HCT116 (cell line): ENCODE measurements at regions of chr20 and their contacts with region 1.

Region 1: GRCh38 chr20:50987592-50988210 is 29.1 kb downstream of the MOCS3 start:
- DNase-seq: peak; percentile 92
- ATAC-seq: peak; percentile 97
- H3K4me3 ChIP-seq: peak overlapping the region; percentile 34 to 36
- H3K27ac ChIP-seq: no peak overlapping the region
- H3K4me1 ChIP-seq: peaks cover 0 to 10% of the 10 kb centered on the region in 2 experiments; a peak in 1 of 4 replicates
- H3K27me3 ChIP-seq: no peaks in the 10 kb centered on the region
- CTCF ChIP-seq: peak; percentile 80 to 89 (median 86)
- POLR2A ChIP-seq: no peak
- RAD21 ChIP-seq: peak; percentile 96

Region 2: DNA sequence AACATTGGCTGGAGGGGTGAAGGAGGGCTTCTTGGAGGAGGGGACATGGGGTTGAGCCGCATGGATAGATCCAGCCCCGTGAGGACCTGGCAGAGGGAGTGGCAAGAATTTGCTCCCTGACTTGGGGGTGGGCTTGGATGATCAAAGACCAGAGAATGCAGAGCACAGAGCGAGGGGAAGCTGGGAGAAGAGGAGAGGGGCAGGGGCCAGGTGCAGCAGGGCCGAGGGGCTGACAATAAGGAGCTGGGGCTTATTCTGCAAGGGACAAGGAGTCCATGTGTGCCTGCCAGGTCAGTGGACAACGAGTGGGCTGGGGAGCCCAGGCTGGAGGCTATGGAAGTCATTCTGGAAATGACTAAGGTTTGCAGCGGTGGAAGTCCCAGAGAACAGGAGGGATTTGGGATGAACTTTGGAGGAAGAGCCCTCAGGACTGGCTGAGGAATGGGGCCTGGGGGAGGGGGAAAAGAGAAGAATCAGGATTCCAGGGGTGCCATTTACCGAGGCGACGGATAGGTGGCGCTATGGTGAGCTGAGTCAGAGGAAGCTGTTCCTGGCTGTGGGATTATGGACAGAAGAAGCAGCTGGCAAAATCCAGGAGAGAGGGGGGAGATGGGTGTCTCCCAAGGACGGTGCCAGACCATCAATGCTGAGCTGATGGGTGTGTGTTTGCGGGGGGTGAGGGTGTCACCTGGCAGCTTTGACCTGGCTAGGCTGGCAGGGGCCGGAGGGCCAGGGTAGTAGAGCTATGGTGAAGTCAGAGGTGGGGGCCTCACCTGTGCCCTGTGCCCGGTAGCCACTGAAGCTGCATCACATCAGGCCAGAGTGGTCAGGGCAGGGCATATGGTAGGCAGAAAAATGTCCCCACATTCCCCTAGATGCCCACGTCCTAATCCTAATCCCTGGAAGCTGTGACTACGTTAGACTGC is 27.4 kb after region 1 on chr20:
- CTCF ChIA-PET with region 1: interaction called, 27 read pairs
- POLR2A ChIA-PET with region 1: no interaction called
- RAD21 ChIA-PET with region 1: interaction called, 5 to 6 read pairs
- intact Hi-C with region 1: no loop called
- DNase-seq: no peak
- ATAC-seq: peak; percentile 93
- H3K4me3 ChIP-seq: no peak overlapping the region
- H3K27ac ChIP-seq: no peak overlapping the region
- H3K4me1 ChIP-seq: no peaks in the 10 kb centered on the region
- H3K27me3 ChIP-seq: no peaks in the 10 kb centered on the region
- CTCF ChIP-seq: peak; percentile 43 to 92 (median 83); a peak in 5 of 6 replicates
- POLR2A ChIP-seq: no peak
- RAD21 ChIP-seq: peak; percentile 71

Region 3: DNA sequence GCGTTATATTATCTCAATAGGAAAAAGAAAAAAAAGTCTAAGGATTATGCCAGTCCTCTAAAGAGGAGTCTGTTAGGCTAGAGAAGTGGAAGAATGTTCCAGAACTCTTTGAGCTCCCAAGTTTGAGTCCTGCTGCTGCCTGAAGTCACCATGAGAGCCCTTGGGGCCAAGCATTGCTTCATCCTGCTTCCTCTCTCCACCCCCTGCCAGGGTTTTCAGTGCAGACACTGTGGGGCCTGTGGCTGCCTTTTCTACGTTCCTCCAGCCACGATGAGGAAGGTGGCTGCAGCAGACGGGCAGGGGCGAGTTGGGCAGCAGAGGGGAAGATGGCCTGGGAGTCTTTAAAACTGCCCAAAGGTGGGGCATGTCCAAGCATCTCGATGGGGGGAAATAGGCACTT is 249.6 kb after region 1 on chr20:
- CTCF ChIA-PET with region 1: no interaction called
- POLR2A ChIA-PET with region 1: no interaction called
- RAD21 ChIA-PET with region 1: no interaction called
- intact Hi-C with region 1: no loop called
- DNase-seq: no peak
- ATAC-seq: no peak
- H3K4me3 ChIP-seq: no peak overlapping the region
- H3K27ac ChIP-seq: no peak overlapping the region
- H3K4me1 ChIP-seq: no peaks in the 10 kb centered on the region
- H3K27me3 ChIP-seq: peaks cover under 1% of the 10 kb centered on the region; the same call in 1 of the 2 replicates
- CTCF ChIP-seq: no peak
- POLR2A ChIP-seq: no peak
- RAD21 ChIP-seq: no peak

Region 4: DNA sequence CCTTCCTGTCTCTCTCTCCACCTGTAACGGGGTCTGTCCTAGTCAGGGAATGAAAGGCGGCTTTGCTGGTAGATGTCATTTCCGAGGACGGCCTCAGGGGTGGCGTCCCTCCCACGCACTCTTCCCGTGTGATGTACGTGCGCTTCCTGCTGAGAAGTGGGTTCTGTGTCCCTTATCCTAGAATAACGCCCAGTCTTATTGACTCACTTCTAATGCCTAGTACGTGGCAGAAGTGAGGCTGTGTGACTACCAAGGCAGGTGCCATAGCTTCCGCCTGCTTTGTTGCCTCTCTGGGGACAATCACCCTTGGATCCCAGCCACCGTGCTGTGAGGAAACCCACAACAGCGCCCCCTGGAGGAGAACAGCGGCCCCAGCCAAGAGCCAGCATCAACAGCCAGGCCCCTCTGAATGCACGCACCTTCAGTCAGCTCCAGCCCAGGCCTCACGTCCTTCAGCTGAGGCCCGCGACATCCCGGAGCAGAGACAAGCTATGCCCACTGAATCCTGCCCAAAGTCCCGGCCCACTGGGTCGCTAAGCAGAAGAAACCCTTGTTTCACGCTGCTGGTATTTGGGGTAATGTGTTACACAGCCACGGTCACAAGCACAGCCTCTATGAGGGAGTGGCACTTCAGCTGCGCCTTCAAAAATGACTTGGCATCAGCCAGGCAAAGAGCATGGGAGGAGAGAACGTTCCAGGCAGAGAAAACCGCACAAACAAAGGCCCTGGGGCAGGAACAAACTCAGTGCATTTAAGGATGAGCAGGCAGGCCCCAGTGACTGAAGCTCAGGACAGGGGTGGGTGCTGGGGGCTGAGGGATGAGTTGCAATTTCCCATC is 330.6 kb after region 1 on chr20:
- CTCF ChIA-PET with region 1: interaction called, 56 read pairs
- POLR2A ChIA-PET with region 1: interaction called, 4 read pairs
- RAD21 ChIA-PET with region 1: interaction called, 3 to 4 read pairs
- intact Hi-C with region 1: no loop called
- DNase-seq: peak; percentile 51
- ATAC-seq: peak; percentile 96
- H3K4me3 ChIP-seq: no peak overlapping the region
- H3K27ac ChIP-seq: no peak overlapping the region
- H3K4me1 ChIP-seq: peaks cover 0 to 7% of the 10 kb centered on the region in 2 experiments; a peak in 3 of 4 replicates
- H3K27me3 ChIP-seq: no peaks in the 10 kb centered on the region
- CTCF ChIP-seq: peak; percentile 72 to 94 (median 94); a peak in 5 of 6 replicates
- POLR2A ChIP-seq: no peak
- RAD21 ChIP-seq: peak; percentile 59

Region 5: DNA sequence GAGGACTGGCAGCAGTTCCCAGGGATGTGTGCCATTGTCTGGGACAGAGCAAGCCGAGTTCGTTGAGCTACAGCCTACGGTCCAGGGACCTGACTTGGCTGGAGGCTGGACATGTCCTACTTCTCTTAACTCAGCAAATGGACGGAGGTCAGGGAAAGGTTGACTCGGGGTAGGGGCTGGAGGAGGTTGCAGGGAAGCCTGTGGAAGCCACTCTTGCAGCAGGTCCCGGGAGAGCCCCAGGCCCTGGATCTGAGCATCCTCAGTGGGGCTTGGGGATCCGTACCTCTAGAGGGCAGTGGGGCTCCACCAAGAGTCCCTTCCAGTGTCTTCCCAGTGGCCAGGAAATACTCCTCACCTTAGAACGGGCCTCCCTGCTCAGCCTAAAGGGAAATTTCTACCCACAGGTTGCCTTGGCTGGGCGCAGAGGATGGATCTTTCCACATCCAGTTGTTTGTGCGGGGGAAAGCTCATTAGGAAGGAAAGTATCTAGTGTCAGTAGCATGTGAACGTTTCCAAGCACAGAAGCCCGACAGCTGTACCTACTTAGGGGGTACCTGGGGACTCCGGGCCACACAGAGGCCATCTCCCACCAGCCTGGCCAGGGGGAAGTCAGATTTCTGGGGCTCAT is 384.6 kb after region 1 on chr20:
- CTCF ChIA-PET with region 1: interaction called, 6 read pairs
- POLR2A ChIA-PET with region 1: interaction called, 4 read pairs
- RAD21 ChIA-PET with region 1: no interaction called
- intact Hi-C with region 1: loop called (anchors 5 kb)
- DNase-seq: peak; percentile 49
- ATAC-seq: peak; percentile 99
- H3K4me3 ChIP-seq: no peak overlapping the region
- H3K27ac ChIP-seq: no peak overlapping the region
- H3K4me1 ChIP-seq: peaks cover 0 to 7% of the 10 kb centered on the region in 2 experiments; a peak in 1 of 4 replicates
- H3K27me3 ChIP-seq: no peaks in the 10 kb centered on the region
- CTCF ChIP-seq: peak; percentile 71 to 88 (median 79); a peak in 5 of 6 replicates
- POLR2A ChIP-seq: no peak
- RAD21 ChIP-seq: peak; percentile 91

Region 6: GRCh38 chr20:51595058-51595532 is 607.4 kb after region 1 on chr20:
- CTCF ChIA-PET with region 1: interaction called, 12 read pairs
- POLR2A ChIA-PET with region 1: no interaction called
- RAD21 ChIA-PET with region 1: no interaction called
- intact Hi-C with region 1: loop called (anchors 10 kb)
- DNase-seq: peak; percentile 73
- ATAC-seq: peak; percentile 99
- H3K4me3 ChIP-seq: no peak overlapping the region
- H3K27ac ChIP-seq: no peak overlapping the region
- H3K4me1 ChIP-seq: peaks cover 6 to 11% of the 10 kb centered on the region in 2 experiments; a peak in 3 of 4 replicates
- H3K27me3 ChIP-seq: no peaks in the 10 kb centered on the region
- CTCF ChIP-seq: peak; percentile 75 to 89 (median 88)
- POLR2A ChIP-seq: no peak
- RAD21 ChIP-seq: peak; percentile 97

Region 7: DNA sequence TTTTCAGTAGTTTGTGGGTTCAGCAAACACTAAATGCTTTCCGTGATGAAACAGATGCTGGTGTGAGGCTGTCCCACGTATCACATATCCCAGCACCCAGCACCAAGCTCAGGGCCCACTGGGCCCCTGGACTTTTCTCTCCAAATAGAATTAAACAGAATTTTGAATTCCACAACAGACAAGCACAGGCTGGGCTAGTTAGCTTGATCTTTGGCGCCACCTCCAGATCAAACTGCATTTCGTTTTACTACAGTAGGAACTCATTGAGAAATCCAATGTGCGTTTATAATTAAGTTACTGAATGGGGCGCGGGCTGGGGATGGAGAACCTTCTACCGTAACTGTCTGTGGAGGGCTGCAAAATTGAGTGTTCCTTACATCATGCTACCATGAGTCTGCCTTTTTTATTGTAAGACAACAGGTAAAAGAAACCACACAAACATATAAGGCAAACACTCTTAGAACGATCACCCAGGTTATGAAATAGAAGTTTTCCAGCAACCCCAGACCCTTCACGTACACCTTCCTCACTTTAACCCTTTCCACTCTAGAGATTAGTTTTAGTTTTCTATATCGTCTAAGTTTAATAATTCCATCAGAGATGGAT is 1096.0 kb after region 1 on chr20:
- CTCF ChIA-PET with region 1: interaction called, 6 read pairs
- POLR2A ChIA-PET with region 1: no interaction called
- RAD21 ChIA-PET with region 1: no interaction called
- intact Hi-C with region 1: loop called (anchors 1 kb)
- DNase-seq: peak; percentile 54
- ATAC-seq: peak; percentile 85
- H3K4me3 ChIP-seq: no peak overlapping the region
- H3K27ac ChIP-seq: no peak overlapping the region
- H3K4me1 ChIP-seq: no peaks in the 10 kb centered on the region
- H3K27me3 ChIP-seq: no peaks in the 10 kb centered on the region
- CTCF ChIP-seq: peak; percentile 58 to 85 (median 77)
- POLR2A ChIP-seq: no peak
- RAD21 ChIP-seq: peak; percentile 95